GM10248 (cell line): ENCODE measurements at regions of chr11 and their contacts with region 1.

Region 1: DNA sequence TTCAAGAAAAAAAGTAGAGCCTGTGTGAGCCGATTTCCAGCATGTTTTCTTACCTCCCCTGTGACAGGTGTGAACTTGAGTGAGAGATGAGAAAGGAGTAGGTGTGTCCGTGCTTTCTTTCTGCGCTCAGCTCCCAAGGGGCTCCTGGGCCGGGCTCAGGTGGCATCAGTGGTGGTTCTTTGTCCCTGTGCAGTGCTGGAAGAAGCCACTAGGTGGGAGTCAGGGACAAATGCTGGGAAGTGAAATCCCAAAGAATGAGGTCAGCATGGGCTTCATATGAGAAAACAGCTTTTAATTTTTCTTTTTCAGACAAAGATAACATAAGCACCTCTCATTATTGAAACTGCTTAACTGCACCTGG is 57.8 kb downstream of the PPFIBP2 start:
- DNase-seq: peak; percentile 42
- CTCF ChIP-seq: peak; percentile 63

Region 2: GRCh38 chr11:7098235-7098832 is 473.3 kb before region 1 on chr11:
- CTCF ChIA-PET with region 1: no interaction called
- POLR2A ChIA-PET with region 1: no interaction called
- DNase-seq: peak; percentile 50
- CTCF ChIP-seq: peak; percentile 66

Region 3: DNA sequence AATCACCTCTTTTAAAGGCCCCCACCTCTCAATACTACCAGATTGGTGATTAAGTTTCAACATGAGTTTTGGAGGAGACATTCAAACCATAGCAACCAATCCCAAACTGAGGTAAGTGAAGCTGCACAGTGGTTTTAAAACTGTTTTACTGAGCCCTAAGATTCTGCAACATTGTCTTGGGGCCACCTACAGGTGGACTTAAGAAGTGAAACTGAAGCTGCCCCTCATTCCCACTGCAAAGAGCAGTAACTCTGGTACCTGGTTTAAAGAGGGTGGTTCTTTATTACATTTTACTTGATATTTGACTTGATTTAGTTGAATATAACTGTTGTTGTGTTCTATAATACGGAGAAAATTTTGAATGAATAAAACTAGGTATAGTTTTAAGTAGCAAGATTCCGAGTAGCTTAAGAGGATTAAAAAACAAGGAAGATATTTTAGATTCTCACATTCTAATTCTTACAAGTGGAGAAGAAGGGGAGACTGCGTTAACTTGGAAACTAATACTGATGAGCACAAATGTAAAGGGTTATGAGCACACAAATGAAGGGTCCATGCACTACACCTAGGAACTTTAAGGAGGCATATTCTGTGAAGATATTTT is 293.2 kb before region 1 on chr11:
- CTCF ChIA-PET with region 1: no interaction called
- POLR2A ChIA-PET with region 1: no interaction called
- DNase-seq: peak; percentile 31
- CTCF ChIP-seq: peak; percentile 56

Region 4: DNA sequence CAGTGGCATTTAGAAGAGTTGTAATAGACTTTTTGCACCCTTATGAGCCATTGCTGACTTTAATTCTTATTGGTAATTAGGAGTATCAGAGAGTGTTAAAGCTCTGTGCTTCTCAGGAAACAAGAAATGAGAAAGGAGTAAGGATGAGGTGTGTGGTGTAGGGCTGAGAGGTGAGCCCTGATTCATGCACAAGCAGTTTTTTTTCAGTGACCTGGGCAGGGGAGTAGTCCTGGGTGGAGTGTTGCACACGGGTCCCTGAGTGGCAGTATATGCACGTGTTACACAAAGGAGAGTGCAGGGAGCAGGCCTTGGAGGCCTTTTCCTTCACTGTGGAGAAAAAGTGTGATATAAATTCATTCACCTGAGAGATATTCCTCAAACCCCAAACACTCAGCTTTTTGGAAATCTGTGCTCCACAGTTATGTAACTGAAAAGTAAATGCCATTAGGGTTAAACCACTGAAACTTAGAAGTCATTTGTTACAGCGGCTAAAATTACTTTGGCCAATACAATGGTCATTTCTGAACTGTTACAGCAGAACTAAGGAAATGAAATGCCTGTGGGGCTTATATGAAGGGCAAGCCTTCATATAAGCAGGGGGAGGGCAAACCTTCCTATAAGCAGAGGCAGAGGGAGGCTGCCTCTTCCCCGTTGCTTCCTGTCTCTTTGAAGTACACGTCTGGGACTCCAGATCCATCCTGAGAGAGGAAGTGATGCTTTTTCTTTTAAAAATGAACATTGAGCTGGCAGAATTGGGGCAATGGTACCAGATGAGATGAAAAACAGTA is 148.9 kb before region 1 on chr11:
- CTCF ChIA-PET with region 1: no interaction called
- POLR2A ChIA-PET with region 1: no interaction called
- DNase-seq: no peak
- CTCF ChIP-seq: no peak

Region 5: DNA sequence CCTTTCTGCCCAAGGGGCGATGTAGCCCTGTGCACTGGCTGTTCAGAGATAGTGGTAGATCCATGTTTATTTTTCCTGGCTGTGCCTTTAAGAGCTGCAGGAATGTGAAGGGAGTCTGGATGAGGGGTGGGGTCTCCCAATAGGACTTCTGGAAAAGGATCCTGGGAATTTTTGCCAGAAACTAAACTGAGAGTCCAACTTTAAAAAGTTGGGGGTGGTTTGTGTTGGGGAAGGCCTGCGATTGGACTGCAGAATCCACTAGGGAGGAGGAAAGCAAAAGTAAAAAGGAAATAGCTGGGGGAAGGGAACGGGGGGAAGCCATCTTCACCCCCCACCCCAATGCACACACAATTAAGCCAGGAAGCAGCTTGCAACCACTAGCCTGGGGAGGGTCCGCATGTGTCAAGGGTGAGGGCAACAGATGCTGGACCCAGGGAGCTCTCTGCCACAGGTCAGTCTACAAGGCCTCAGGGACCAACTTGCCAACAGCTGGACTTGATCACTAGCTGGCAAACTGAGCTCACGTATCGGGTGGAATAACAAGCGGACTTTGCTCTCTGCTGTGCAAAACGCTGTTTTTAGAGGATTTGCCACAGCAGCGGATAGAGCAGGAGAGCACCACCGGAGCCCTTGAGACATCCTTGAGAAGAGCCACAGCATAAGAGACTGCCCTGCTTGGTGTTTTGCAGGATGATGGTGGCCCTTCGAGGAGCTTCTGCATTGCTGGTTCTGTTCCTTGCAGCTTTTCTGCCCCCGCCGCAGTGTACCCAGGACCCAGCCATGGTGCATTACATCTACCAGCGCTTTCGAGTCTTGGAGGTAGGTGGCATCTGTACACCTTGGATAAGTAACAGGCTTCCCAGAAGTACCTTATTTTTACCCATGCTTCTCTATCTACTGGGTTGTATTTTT is 86.2 kb before region 1 on chr11 and contains the start of gene OLFML1:
- CTCF ChIA-PET with region 1: no interaction called
- POLR2A ChIA-PET with region 1: no interaction called
- DNase-seq: no peak
- CTCF ChIP-seq: no peak

Region 6: GRCh38 chr11:7559398-7560283 is 12.0 kb before region 1 on chr11:
- CTCF ChIA-PET with region 1: interaction called, 19 read pairs
- POLR2A ChIA-PET with region 1: no interaction called
- DNase-seq: no peak
- CTCF ChIP-seq: no peak